GM12878 (cell line): ENCODE measurements at regions of chr1 and their contacts with region 1.

Region 1: GRCh38 chr1:246002725-246003441 is 504.2 kb downstream of the SMYD3 start:
- DNase-seq: peak; percentile 39
- ATAC-seq: peak; percentile 85
- H3K4me3 ChIP-seq: no peak overlapping the region
- H3K27ac ChIP-seq: no peak overlapping the region
- H3K4me1 ChIP-seq: peaks cover 4% of the 10 kb centered on the region; the same call in 1 of the 2 replicates
- H3K27me3 ChIP-seq: no peaks in the 10 kb centered on the region
- CTCF ChIP-seq: peak; percentile 77 to 91 (median 82)
- EP300 ChIP-seq: no peak
- POLR2A ChIP-seq: no peak
- RAD21 ChIP-seq: peak; percentile 99

Region 2: DNA sequence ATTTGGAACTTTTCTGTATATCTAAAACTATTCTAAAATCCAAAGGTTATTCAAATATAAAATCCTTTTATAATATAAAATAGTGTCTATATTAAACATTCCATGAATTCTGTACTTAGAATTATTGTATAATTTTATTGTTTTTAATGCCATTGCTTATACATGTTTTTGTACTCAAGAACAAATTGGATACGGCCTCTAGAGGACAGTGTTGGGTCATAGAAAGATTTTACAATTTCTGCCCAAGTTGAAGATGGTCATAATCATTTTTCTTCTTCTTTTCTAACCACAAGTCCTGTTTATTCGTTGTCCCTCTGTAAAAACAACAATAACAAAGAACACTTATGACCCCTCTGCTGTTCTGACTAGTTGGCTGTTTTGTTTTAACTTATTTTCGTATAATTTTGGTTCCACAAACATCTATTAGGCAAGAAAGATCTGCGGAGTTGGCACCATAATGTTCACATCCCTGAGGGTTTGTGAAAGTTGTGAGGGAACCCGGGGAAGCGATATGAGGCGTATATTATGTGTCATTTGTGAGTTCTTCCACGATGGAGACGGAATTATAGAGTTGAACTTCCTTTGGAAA is 923.8 kb before region 1 on chr1:
- CTCF ChIA-PET with region 1: no interaction called
- POLR2A ChIA-PET with region 1: no interaction called
- RAD21 ChIA-PET with region 1: no interaction called
- SMC1A ChIA-PET with region 1: no interaction called
- in situ Hi-C with region 1: loop called (anchors 10 kb)
- intact Hi-C with region 1: loop called (anchors 5 kb)
- DNase-seq: no peak
- ATAC-seq: no peak
- H3K4me3 ChIP-seq: no peak overlapping the region
- H3K27ac ChIP-seq: no peak overlapping the region
- H3K4me1 ChIP-seq: no peaks in the 10 kb centered on the region
- H3K27me3 ChIP-seq: no peaks in the 10 kb centered on the region; a peak in 1 of 4 replicates
- CTCF ChIP-seq: peak; percentile 55 to 66 (median 60)
- EP300 ChIP-seq: no peak
- POLR2A ChIP-seq: no peak
- RAD21 ChIP-seq: peak; percentile 65

Region 3: GRCh38 chr1:245566952-245567351 is 435.9 kb before region 1 on chr1:
- CTCF ChIA-PET with region 1: no interaction called
- POLR2A ChIA-PET with region 1: no interaction called
- RAD21 ChIA-PET with region 1: no interaction called
- SMC1A ChIA-PET with region 1: no interaction called
- in situ Hi-C with region 1: no loop called
- intact Hi-C with region 1: loop called (anchors 10 kb)
- DNase-seq: no peak
- ATAC-seq: no peak
- H3K4me3 ChIP-seq: no peak overlapping the region
- H3K27ac ChIP-seq: no peak overlapping the region
- H3K4me1 ChIP-seq: no peaks in the 10 kb centered on the region
- H3K27me3 ChIP-seq: no peaks in the 10 kb centered on the region
- CTCF ChIP-seq: no peak
- EP300 ChIP-seq: no peak
- POLR2A ChIP-seq: no peak
- RAD21 ChIP-seq: no peak

Region 4: DNA sequence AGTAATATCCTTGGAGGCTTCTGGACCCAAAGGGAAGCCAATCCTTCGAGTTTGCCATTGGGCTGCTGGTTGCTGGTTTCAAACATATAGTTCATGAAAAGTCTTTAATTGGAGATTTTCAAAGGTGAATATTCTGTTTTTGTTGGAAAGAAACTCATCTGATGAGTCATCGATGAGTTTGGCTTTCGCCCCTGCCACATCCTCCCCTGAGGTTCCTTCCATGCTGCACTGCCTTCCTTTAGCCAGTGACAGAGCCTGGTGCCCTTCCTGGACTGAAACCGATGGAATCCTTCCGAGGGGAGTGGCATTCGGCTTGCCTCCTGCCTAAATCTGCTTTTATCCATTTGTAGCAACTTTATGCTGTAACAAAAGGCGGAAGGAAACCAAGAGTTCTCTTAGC is 298.1 kb before region 1 on chr1:
- CTCF ChIA-PET with region 1: no interaction called
- POLR2A ChIA-PET with region 1: no interaction called
- RAD21 ChIA-PET with region 1: no interaction called
- SMC1A ChIA-PET with region 1: no interaction called
- in situ Hi-C with region 1: no loop called
- intact Hi-C with region 1: loop called (anchors 10 kb)
- DNase-seq: no peak
- ATAC-seq: no peak
- H3K4me3 ChIP-seq: no peak overlapping the region
- H3K27ac ChIP-seq: no peak overlapping the region
- H3K4me1 ChIP-seq: no peaks in the 10 kb centered on the region
- H3K27me3 ChIP-seq: no peaks in the 10 kb centered on the region
- CTCF ChIP-seq: no peak
- EP300 ChIP-seq: no peak
- POLR2A ChIP-seq: no peak
- RAD21 ChIP-seq: no peak

Region 5: DNA sequence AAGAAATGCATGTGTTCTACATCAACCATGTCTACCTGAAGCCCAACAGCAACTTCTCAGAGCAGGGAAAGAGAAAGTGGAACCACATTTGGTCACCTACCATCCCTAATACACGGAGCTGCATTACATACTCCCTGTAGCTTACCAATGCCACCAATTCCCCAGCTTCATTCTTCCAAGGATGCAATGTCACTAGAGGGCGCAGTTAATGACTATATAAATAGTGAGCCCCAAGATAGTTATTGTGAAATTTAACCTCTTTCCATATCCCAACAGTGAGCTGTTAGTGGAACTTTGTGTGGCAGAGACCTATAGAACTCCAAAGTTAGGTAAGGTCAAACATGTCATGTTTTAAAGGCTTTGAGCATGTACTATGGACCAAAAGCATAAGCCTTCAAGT is 114.1 kb before region 1 on chr1:
- CTCF ChIA-PET with region 1: interaction called, 48 read pairs
- POLR2A ChIA-PET with region 1: no interaction called
- RAD21 ChIA-PET with region 1: interaction called, 17 read pairs
- SMC1A ChIA-PET with region 1: interaction called, 30 read pairs
- in situ Hi-C with region 1: no loop called
- intact Hi-C with region 1: loop called (anchors 1 kb)
- DNase-seq: peak; percentile 20
- ATAC-seq: peak; percentile 76
- H3K4me3 ChIP-seq: no peak overlapping the region
- H3K27ac ChIP-seq: no peak overlapping the region
- H3K4me1 ChIP-seq: no peaks in the 10 kb centered on the region
- H3K27me3 ChIP-seq: no peaks in the 10 kb centered on the region
- CTCF ChIP-seq: peak; percentile 45 to 53 (median 51); a peak in 5 of 6 replicates
- EP300 ChIP-seq: no peak
- POLR2A ChIP-seq: no peak
- RAD21 ChIP-seq: peak; percentile 47

Region 6: GRCh38 chr1:245921417-245921816 is 81.5 kb before region 1 on chr1:
- CTCF ChIA-PET with region 1: no interaction called
- POLR2A ChIA-PET with region 1: no interaction called
- RAD21 ChIA-PET with region 1: no interaction called
- SMC1A ChIA-PET with region 1: no interaction called
- in situ Hi-C with region 1: no loop called
- intact Hi-C with region 1: no loop called
- DNase-seq: no peak
- ATAC-seq: no peak
- H3K4me3 ChIP-seq: no peak overlapping the region
- H3K27ac ChIP-seq: no peak overlapping the region
- H3K4me1 ChIP-seq: peaks cover 3% of the 10 kb centered on the region; the same call in 1 of the 2 replicates
- H3K27me3 ChIP-seq: no peaks in the 10 kb centered on the region
- CTCF ChIP-seq: no peak
- EP300 ChIP-seq: no peak
- POLR2A ChIP-seq: no peak
- RAD21 ChIP-seq: no peak

Region 7: DNA sequence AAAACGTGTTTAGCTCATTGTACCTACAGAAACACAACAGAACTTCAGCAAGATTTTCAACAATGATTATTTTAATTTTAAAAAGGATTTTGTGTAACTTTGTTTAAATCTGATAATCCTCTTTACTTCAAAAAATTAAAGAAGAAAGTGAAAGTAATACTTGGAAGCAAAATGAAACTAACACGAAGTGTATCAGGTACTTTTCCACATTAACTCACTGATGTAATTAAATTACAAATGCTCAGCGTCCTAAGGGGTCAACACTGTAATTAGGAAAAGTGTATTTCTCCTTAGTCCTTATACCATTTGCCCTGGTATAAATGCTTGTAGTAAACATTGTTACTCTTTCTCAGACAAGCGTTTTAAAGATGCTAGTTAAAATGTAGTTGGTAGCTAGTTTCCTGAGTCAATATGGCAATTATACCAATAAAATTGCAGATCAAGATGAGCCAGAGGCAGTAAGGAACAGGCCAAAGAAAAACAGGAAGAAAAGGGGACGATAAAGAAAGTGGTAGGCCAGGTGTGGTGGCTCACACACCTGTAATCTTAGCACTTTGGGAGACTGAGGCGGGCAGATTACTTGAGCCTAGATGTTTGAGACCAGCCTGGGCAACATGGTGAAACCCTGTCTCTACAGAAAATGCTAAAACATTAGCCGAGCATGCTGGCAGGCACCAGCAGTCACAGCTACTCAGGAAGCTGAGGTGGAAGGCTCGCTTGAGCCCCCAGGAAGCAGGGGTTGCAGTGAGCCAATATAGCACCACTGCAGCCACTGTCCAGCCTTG is 48.8 kb before region 1 on chr1:
- CTCF ChIA-PET with region 1: interaction called, 3 read pairs
- POLR2A ChIA-PET with region 1: no interaction called
- RAD21 ChIA-PET with region 1: interaction called, 4 read pairs
- SMC1A ChIA-PET with region 1: interaction called, 8 read pairs
- in situ Hi-C with region 1: no loop called
- intact Hi-C with region 1: loop called (anchors 2 kb)
- DNase-seq: peak; percentile 32
- ATAC-seq: peak; percentile 67
- H3K4me3 ChIP-seq: peak overlapping the region; percentile 66
- H3K27ac ChIP-seq: peak overlapping the region; percentile 98
- H3K4me1 ChIP-seq: peaks cover 25% of the 10 kb centered on the region
- H3K27me3 ChIP-seq: no peaks in the 10 kb centered on the region
- CTCF ChIP-seq: no peak
- EP300 ChIP-seq: no peak
- POLR2A ChIP-seq: no peak
- RAD21 ChIP-seq: no peak